Calu3 (cell line): ENCODE measurements at regions of chr3 and their contacts with region 1.

Region 1: GRCh38 chr3:161409069-161409468 is 37.8 kb upstream of the SPTSSB start:
- DNase-seq: peak; percentile 76
- H3K4me3 Mint-ChIP-seq: no peak overlapping the region
- H3K27ac Mint-ChIP-seq: peak overlapping the region; percentile 12
- H3K4me1 Mint-ChIP-seq: peaks cover 53% of the 10 kb centered on the region
- H3K27me3 Mint-ChIP-seq: no peaks in the 10 kb centered on the region
- CTCF ChIP-seq: peak; percentile 88

Region 2: DNA sequence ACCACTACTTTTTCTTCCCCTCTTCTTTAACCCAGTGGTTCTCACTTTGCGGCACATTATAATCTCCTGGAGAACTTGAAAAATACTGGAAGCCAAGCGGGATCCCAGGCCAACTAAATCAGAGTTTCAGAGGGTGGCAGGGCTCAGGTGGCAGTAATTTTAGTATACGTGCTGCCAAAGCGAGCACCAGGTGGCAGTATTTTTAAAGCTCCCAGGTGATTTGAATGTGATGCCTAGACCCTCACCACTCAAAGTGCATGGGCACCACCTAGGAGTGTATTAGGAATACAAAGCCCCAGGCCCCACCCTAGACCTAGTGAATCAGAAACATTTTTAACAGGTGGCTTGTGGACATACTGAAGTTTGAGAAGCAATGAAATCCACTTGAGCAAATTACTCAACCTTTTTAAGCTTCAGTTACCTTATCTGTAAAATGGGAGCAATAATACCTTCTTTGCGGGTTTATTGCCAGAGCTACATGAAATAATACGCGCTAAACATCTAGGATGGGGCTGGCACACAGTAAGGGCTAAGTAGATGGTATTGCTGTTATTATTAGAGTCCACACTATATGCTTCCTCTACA is 312.2 kb before region 1 on chr3:
- CTCF ChIA-PET with region 1: no interaction called
- intact Hi-C with region 1: loop called (anchors 5 kb)
- DNase-seq: peak; percentile 68
- H3K4me3 Mint-ChIP-seq: no peak overlapping the region
- H3K27ac Mint-ChIP-seq: no peak overlapping the region
- H3K4me1 Mint-ChIP-seq: peaks cover 10% of the 10 kb centered on the region
- H3K27me3 Mint-ChIP-seq: no peaks in the 10 kb centered on the region
- CTCF ChIP-seq: peak; percentile 91

Region 3: DNA sequence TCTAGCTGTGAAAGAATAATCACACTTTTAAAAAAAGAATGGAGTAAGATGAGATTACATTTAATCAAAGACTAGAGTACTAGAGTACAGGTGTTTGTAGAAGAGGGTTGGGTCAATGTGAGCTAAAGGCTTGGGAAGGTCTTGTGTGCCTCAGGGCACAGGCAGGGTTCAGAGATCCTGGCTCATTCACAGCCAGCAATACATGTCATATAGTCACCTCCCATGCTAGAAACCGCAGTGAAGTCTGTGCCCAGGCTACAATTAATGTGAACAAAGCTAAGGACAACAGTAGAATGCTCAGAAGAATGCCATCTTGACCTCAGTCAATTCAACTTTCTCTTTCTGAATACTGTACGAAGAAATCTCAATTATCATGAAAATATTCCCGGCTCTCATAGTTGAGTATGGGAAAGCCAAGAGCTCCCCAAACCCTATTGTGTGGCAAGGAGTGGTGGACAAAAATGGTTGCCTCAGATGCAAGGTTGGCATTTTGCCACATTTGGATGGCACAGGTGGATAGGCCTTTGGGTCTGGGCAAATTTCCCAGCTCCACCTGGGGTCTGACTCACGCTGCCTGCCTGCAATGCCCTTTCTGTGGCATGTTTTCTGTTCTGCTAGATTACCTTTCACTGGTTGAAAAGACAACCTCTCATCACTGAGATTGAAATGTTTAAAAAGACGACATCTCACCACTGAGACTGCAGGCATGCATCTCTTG is 117.7 kb before region 1 on chr3:
- CTCF ChIA-PET with region 1: interaction called, 7 read pairs
- intact Hi-C with region 1: loop called (anchors 5 kb)
- DNase-seq: peak; percentile 84
- H3K4me3 Mint-ChIP-seq: no peak overlapping the region
- H3K27ac Mint-ChIP-seq: peak overlapping the region; percentile 24
- H3K4me1 Mint-ChIP-seq: peaks cover 25% of the 10 kb centered on the region
- H3K27me3 Mint-ChIP-seq: no peaks in the 10 kb centered on the region
- CTCF ChIP-seq: no peak

Region 4: DNA sequence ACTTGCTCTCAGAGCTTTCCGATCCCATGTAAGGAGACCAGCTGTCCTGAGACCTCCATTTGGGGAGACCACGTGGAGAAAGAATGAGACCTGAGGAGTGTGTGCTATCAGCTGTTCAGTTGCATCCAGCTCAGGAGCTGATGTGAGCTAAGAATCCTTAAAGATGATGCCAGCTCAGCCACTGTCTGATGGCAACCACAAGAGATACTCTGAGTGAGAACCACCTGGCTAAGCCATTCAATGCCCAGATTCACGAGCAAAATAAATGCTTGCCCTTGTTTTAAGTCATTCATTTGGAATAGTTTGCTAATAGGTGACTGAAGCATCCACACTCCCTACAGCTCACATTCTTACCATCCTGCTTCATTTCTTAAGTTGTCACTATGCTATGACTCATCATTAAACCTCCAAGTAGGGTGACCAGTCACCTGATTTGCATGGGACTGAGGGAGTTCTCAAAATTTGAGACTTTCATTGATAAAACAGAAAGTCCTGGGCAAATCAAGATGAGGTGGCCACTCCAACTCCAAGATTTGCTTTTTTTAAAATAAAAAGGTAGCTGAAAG is 94.2 kb before region 1 on chr3:
- CTCF ChIA-PET with region 1: no interaction called
- intact Hi-C with region 1: loop called (anchors 1 kb)
- DNase-seq: peak; percentile 35
- H3K4me3 Mint-ChIP-seq: no peak overlapping the region
- H3K27ac Mint-ChIP-seq: peak overlapping the region; percentile 84
- H3K4me1 Mint-ChIP-seq: peaks cover 34% of the 10 kb centered on the region
- H3K27me3 Mint-ChIP-seq: no peaks in the 10 kb centered on the region
- CTCF ChIP-seq: no peak

Region 5: DNA sequence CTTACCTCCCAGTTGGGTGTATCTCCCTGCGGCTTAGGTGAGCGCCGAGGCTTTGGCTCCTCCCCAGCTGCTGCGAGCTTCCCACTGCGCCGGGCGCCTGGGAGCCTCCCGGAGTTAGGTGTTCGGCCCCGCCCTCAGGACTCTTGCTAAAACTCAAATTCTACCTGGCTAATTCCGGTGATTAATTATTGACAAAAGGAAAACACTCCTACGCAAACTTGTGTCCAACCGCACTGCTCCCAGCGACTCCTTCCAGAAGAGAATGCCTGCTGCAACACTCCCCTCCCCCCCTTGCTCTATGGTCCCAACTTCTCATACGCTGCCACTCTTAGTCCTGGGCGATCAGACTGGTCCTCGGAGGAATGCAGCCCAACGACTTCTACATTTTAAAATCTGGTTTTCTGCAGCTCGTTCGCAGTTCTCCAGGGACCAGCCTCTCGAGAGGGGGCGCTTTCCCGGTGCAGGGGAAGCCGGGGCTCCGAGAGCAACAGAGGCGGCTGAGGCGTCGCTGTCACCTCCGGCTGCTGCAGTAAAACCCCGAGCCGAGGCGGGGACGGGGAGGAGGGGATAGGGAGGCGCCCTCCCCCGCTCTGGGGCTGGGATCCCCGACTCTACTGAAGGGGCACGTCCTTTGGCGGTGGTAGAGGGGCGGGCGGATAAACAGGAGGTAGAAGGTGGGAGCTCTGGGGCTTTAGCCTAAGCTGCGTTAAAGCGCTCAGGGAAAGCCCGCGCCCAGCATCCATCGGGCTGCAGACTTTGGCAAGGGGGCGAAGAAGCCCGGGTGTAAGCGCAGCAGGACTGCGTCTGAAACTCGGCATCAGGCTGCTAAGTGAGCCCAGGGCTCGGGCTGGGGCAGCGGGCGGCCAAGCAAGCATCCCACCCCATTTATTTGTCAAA is 37.4 kb before region 1 on chr3 and contains the start of gene SPTSSB:
- CTCF ChIA-PET with region 1: interaction called, 3 read pairs
- intact Hi-C with region 1: loop called (anchors 2 kb)
- DNase-seq: peak; percentile 90
- H3K4me3 Mint-ChIP-seq: peak within 1 kb of the TSS; percentile 88
- H3K27ac Mint-ChIP-seq: peak within 1 kb of the TSS; percentile 30
- H3K4me1 Mint-ChIP-seq: peaks cover 12% of the 10 kb centered on the region
- H3K27me3 Mint-ChIP-seq: no peaks in the 10 kb centered on the region
- CTCF ChIP-seq: peak; percentile 19
- total RNA-seq, gene SPTSSB: 3.0 and 8.1 TPM in 2 replicates